H1 (cell line): ENCODE measurements at regions of chr2 and their contacts with region 1.

Region 1: DNA sequence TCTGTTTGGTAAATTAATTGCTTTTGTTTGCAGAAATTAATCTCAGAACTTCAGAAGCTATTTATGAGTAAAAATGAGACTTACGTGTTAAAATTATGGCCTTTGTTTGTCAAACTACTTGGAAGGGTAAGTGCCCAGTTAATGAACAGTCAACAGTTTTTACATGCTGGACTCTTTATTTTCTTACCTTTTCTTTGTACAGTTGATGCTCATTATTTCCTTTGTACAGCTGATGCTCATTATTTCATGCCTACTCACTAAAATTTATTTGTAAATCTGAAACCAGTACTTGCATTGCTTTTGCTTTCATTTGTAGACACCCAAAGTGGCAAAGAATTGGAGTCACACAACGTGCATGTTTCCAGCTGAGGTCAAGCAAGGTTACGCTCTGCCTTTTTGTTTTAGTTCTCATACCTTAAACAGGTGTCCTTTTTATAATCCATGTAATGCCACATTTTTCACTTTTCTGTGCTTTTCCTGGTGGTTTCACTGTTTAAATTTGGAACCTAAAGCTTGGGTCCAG is 13.3 kb downstream of the RIF1 start:
- DNase-seq: no peak
- H3K4me3 ChIP-seq: no peak overlapping the region
- H3K27ac ChIP-seq: no peak overlapping the region
- H3K4me1 ChIP-seq: no peaks in the 10 kb centered on the region
- H3K27me3 ChIP-seq: no peaks in the 10 kb centered on the region
- CTCF ChIP-seq: no peak
- EP300 ChIP-seq: no peak
- POLR2A ChIP-seq: no peak
- RAD21 ChIP-seq: no peak

Region 2: GRCh38 chr2:151409601-151410484 is 13.1 kb before region 1 on chr2 and contains the start of gene RIF1:
- CTCF ChIA-PET with region 1: no interaction called
- POLR2A ChIA-PET with region 1: interaction called, 12 read pairs
- DNase-seq: peak; percentile 90 to 92
- H3K4me3 ChIP-seq: peak within 1 kb of the TSS; percentile 77 to 94 (median 82)
- H3K27ac ChIP-seq: peak within 1 kb of the TSS; percentile 99
- H3K4me1 ChIP-seq: peaks cover 0 to 7% (median 3%) of the 10 kb centered on the region in 4 experiments; a peak in 3 of 7 replicates
- H3K27me3 ChIP-seq: no peaks in the 10 kb centered on the region
- CTCF ChIP-seq: peak; percentile 14 to 42 (median 41); a peak in 3 of 4 replicates
- EP300 ChIP-seq: peak in 1 of 2 experiments; percentile 80; a peak in 1 of 3 replicates
- POLR2A ChIP-seq: peak; percentile 91 to 92
- RAD21 ChIP-seq: peak; percentile 0 to 18; a peak in 2 of 4 replicates
- total RNA-seq, gene RIF1: 94.0 and 104 TPM in 2 replicates

Region 3: DNA sequence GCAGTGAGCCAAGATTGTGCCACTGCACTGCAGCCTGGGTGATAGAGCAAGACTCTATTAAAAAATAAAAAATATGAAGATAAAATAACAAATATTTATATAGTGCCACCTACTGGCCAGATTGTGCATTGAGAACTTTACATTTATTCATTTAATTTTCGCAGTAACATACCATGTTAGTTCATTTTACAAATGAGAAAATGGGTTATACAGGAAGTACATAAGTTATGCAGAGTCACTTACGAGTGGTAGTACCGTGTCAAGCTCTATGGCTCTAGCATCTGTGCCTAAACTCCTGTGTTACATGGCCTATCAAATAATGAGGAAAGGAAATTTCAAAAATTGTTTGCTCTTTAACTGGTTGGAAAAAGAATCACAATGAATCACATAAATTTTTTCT is 14.7 kb after region 1 on chr2:
- CTCF ChIA-PET with region 1: interaction called, 40 read pairs
- POLR2A ChIA-PET with region 1: interaction called, 39 read pairs
- DNase-seq: no peak
- H3K4me3 ChIP-seq: no peak overlapping the region
- H3K27ac ChIP-seq: no peak overlapping the region
- H3K4me1 ChIP-seq: no peaks in the 10 kb centered on the region
- H3K27me3 ChIP-seq: no peaks in the 10 kb centered on the region
- CTCF ChIP-seq: peak in 1 of 3 experiments; percentile 13; a peak in 1 of 4 replicates
- EP300 ChIP-seq: no peak
- POLR2A ChIP-seq: no peak
- RAD21 ChIP-seq: no peak